Body of pancreas (tissue), 4 donors: ENCODE measurements at regions of chr11 and their contacts with region 1.

Region 1: GRCh38 chr11:65454696-65455456 is 32.3 kb downstream of the NEAT1 start:
- DNase-seq: peak; percentile 88 to 93 (median 90)
- ATAC-seq: peak; percentile 96
- H3K4me3 ChIP-seq: no peak overlapping the region
- H3K27ac ChIP-seq: peak overlapping the region; percentile 12 to 74 (median 54)
- H3K4me1 ChIP-seq: peaks cover 10% of the 10 kb centered on the region
- H3K27me3 ChIP-seq: no peaks in the 10 kb centered on the region
- CTCF ChIP-seq: peak in 1 of 7 experiments; percentile 10
- POLR2A ChIP-seq: peak in 2 of 3 donors; percentile 57 to 70

Region 2: DNA sequence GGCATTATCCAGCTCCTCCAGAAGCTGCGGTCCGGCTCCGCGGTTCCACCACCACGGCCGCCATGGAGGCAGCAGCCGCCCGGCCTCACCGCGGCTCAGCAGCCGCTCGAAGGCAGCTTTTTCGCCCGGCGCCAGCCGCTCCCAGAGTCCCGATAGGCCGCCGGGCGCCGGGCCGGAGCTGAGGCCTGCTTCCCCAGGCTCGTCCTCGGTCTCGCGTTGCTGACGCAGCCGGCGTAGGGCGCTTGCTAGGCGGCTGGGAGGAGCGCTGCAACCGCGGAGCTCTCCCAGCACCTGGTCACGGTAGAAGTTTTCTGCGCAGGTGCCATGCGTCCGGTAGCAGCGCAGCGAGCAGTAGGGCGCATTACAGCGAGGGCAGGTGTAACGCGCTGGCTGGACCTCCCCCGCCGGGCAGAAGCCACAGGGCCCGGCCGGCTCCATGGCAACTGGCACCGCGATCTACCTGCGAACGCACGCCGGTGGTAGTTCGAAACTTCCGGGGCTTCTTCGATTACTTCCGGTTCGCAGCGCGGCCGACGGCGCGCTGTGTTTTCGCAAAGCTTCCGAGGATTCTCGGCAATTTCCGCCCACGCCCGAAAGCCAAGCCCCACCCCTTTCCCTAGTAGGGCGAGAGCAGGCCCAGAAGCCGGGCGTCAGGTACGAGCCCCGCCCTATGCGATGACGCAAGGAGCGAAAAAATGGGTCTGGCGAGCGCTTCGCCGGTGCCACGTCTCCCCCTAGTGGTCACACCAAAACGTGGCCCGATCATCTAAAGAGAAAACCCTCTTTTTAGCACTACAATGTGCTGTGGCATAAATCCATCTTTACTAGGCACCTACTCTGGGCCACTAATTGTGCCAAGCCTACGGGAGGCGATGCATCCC is 337.4 kb before region 1 on chr11 and contains the start of gene ZNHIT2:
- intact Hi-C with region 1: no loop called
- DNase-seq: peak; percentile 100
- ATAC-seq: peak; percentile 83
- H3K4me3 ChIP-seq: peak within 1 kb of the TSS; percentile 52 to 69
- H3K27ac ChIP-seq: peak within 1 kb of the TSS; percentile 71 to 96 (median 91)
- H3K4me1 ChIP-seq: peaks cover 61% of the 10 kb centered on the region
- H3K27me3 ChIP-seq: no peaks in the 10 kb centered on the region
- CTCF ChIP-seq: peak; percentile 90 to 99 (median 97)
- POLR2A ChIP-seq: peak; percentile 73 to 92 (median 90)
- total RNA-seq, gene ZNHIT2: 18.7 to 33.9 TPM

Region 3: DNA sequence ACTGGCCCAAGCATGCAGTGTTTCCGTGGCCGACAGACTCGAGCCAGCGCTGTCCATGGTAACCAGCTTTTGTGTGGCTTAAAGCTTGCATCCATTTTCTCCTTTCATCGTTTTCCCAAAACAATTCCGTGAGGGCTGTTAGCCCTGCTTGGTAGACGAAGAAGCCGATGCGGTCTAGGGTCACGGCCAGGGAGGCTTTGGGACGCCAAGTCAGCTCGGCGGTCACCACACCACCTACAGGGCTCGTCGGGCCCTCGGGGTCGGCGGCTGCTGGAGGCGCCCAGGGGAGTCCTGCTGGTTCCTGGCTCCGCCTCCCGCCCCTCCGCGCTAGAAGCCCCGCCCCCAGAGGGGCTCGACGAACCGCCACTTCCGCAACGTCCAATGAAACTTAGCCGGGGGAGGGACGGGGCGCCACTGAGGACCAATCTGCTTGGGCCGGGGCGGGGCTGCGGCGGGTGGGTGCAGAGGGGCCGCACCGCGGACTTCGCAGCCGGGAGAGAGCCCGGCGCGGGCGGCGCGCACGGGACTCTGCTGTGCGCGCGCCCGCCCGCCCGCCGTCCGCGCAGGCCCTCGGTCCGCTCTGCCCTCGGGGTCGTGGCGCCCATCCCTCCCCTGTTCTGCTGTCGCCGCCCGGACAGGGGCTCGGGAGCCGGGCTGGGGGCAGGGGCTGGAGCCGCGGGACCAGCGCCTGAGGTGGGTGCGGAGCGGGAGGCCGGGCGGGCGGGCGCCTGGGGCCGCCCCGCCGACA is 100.4 kb before region 1 on chr11 and contains the start of gene TIGD3:
- intact Hi-C with region 1: loop called (anchors 5 kb)
- DNase-seq: peak; percentile 97 to 99 (median 98)
- ATAC-seq: peak; percentile 97
- H3K4me3 ChIP-seq: peak within 1 kb of the TSS; percentile 11 to 46
- H3K27ac ChIP-seq: peak within 1 kb of the TSS in 3 of 4 donors; percentile 26 to 74 (median 53)
- H3K4me1 ChIP-seq: peaks cover 19% of the 10 kb centered on the region
- H3K27me3 ChIP-seq: no peaks in the 10 kb centered on the region
- CTCF ChIP-seq: no peak
- POLR2A ChIP-seq: peak in 2 of 3 donors; percentile 35 to 46
- total RNA-seq, gene TIGD3: not detected

Region 4: DNA sequence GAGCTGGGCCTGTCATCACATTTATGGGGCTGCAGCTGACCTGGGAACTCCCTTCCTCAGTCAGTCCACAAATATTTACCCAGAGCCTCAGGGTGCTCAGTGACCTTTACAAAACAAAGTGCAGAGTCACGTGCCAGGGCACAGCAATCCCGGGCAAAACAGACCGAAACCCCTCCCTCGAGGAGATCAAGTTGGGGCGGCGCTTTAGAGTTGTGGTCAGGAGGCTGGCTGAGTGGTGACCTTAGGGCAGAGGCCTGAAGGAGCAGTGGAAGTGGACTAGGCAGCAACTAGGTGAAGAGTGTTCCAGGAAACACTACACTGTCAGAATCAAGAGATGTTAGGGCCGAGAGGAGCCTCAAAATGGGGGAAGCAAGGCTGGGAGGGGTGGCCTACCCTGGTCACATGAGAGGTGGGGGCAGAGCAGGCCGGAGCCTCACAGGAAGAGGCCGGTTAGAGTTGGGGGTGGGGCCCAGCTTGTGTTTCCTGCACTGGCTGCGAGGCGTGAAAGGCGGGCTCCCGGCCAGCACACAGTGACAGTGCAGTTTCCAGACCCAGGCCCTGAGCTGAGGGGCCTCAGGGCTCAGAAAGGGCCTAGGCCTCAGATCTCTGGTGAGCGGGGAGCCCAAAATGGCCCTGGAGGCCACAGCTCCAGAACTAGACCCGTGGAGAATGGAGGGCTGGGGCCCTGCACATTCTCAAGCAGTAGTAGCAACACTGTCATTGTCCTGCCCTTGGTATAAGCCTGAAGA is 36.0 kb before region 1 on chr11:
- intact Hi-C with region 1: loop called (anchors 10 kb)
- DNase-seq: peak; percentile 95 to 98 (median 98)
- ATAC-seq: peak; percentile 47
- H3K4me3 ChIP-seq: no peak overlapping the region
- H3K27ac ChIP-seq: peak overlapping the region; percentile 98 to 100 (median 100)
- H3K4me1 ChIP-seq: peaks cover 57% of the 10 kb centered on the region
- H3K27me3 ChIP-seq: no peaks in the 10 kb centered on the region
- CTCF ChIP-seq: no peak
- POLR2A ChIP-seq: no peak

Region 5: GRCh38 chr11:65506770-65507505 is 52.1 kb after region 1 on chr11:
- intact Hi-C with region 1: no loop called
- DNase-seq: peak in 3 of 4 donors; percentile 52 to 68 (median 61)
- ATAC-seq: peak; percentile 9
- H3K4me3 ChIP-seq: no peak overlapping the region
- H3K27ac ChIP-seq: peak overlapping the region; percentile 54 to 99 (median 98)
- H3K4me1 ChIP-seq: peaks cover 44% of the 10 kb centered on the region
- H3K27me3 ChIP-seq: no peaks in the 10 kb centered on the region
- CTCF ChIP-seq: peak in 1 of 7 experiments; percentile 3
- POLR2A ChIP-seq: peak; percentile 59 to 79 (median 72)